ENCODE measurements at regions of chr12 and their contacts with region 1.

Region 1: GRCh38 chr12:64780531-64781279 is 21.5 kb upstream of the GNS start:
- DNase-seq: peak; percentile 48
- H3K27ac ChIP-seq: no peak overlapping the region
- CTCF ChIP-seq: 0 out of 2 replicates have a peak, but pooled peaks have one; percentile 8

Region 2: DNA sequence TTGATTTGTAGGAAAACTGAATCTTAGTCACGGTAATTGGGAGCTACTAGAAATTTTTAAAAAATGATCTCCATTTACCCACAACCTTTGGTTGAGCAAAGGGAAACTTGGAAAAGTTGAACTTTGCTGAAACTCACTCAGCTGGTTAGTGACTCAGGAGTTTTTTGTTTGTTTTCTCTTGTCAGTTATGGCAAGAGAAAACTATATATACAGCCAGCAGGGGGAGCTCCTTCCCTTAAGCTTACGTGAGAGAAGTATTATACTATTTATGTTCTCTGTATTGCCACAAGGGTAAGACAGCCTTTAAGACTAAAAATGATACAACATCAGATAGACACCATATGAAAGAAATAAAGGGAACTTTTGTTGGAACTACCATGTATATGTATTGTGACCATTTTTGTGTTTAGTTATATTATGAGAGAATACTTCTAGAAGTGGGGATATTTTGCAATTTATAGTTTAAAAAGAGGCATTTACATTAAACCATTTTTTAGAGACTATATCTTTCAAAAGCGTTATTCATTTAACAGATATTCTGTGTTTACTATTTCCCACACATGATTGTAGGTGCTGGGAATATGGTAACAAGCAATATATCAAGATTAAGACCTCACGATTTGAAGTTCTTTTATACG is 15.6 kb after region 1 on chr12:
- CTCF ChIA-PET with region 1: interaction called, 13 read pairs
- POLR2A ChIA-PET with region 1: no interaction called
- DNase-seq: peak; percentile 80
- H3K27ac ChIP-seq: no peak overlapping the region
- CTCF ChIP-seq: peak; percentile 86

Region 3: DNA sequence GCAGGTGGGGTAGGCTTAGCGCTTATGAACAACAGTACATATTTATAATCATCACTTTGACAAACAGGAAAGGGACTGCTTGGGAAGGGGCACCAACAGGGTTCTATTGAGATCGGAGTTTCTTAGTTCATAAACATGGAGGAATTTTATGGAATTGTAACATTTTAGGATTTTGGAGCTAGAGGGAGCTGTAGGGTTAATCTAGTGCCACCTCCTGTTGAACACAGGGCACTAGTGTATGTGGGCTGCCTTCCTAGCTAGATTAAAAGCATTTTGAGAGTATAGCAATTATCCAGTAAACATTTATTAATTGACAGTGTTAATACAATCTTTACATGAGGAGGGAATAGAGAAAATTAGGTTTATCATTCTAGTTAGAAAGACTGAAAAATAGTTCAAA is 20.7 kb after region 1 on chr12:
- CTCF ChIA-PET with region 1: interaction called, 13 read pairs
- POLR2A ChIA-PET with region 1: no interaction called
- DNase-seq: peak; percentile 35
- H3K27ac ChIP-seq: no peak overlapping the region
- CTCF ChIP-seq: no peak

Region 4: GRCh38 chr12:64900540-64900939 is 119.8 kb after region 1 on chr12:
- CTCF ChIA-PET with region 1: no interaction called
- POLR2A ChIA-PET with region 1: no interaction called
- DNase-seq: peak; percentile 39
- H3K27ac ChIP-seq: no peak overlapping the region
- CTCF ChIP-seq: no peak